HEK293 (cell line): ENCODE measurements at regions of chr17 and their contacts with region 1.

Region 1: DNA sequence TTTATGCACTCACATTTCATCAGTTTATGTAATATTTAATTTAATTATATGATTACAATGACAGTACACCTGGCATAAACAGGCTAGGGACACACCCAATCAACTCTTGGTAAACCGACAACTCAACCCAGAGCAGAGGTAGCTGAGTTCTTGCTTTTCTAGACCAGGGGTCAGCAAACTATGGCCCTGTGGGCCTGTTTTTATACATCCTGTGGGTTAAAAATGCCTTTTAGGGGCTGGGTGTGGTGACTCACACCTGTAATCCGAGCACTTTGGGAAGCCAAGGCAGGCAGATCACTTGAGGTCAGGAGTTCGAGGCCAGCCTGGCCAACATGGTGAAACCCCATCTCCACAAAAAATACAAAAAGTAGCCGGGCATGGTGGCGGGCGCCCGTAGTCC is 99.2 kb upstream of the TMEM97 start:
- H3K4me3 ChIP-seq: no peak overlapping the region
- H3K27ac ChIP-seq: no peak overlapping the region
- H3K4me1 ChIP-seq: no peaks in the 10 kb centered on the region
- CTCF ChIP-seq: no peak

Region 2: GRCh38 chr17:27968206-27968732 is 251.5 kb before region 1 on chr17:
- CTCF ChIA-PET with region 1: no interaction called
- POLR2A ChIA-PET with region 1: interaction called, 10 read pairs
- H3K4me3 ChIP-seq: no peak overlapping the region
- H3K27ac ChIP-seq: no peak overlapping the region
- H3K4me1 ChIP-seq: peaks cover 3% of the 10 kb centered on the region; the same call in 1 of the 2 replicates
- CTCF ChIP-seq: no peak